ENCODE measurements at regions of chr10 and their contacts with region 1.

Region 1: DNA sequence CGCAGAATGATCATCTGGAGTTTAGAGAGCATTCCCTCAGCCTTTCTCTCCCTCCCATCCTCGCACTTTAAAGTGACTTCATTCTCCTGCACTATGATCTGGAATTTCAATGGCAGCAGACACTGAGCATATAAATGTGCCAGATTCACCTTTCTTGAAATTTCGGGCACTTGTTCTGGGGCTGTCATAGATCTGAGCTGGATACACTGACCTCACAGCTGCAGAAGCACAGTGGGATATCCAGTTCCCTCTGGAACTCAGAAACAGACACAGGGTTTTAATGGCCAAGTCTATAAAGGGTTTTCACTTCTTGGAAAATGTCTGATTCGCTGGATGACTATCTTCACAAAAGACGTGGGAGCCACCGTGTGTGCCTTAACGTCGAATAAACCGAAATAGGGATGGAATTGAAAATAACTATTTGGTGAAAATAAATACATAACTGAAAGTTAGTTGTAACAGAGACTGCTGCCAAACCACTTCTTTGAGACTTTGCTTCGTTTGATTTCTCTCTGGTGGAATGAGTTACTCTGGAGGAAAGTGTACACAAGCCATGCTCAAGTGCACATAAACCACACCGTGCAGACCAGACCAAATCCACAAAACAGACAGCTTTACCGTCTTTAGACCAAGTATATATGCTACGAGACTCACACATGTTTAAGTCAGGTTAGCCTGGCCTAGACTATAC is 126.1 kb downstream of the SVIL start:
- DNase-seq: no peak
- ATAC-seq: no peak
- H3K4me3 Mint-ChIP-seq: no peak overlapping the region
- H3K27ac Mint-ChIP-seq: no peak overlapping the region
- H3K4me1 Mint-ChIP-seq: peaks cover 5% of the 10 kb centered on the region
- H3K27me3 Mint-ChIP-seq: no peaks in the 10 kb centered on the region

Region 2: GRCh38 chr10:29522061-29522855 is 13.6 kb after region 1 on chr10:
- CTCF ChIA-PET with region 1: interaction called, 53 read pairs
- POLR2A ChIA-PET with region 1: no interaction called
- DNase-seq: no peak
- ATAC-seq: peak; percentile 42
- H3K4me3 Mint-ChIP-seq: peak overlapping the region; percentile 12
- H3K27ac Mint-ChIP-seq: peak overlapping the region; percentile 52
- H3K4me1 Mint-ChIP-seq: peaks cover 12% of the 10 kb centered on the region
- H3K27me3 Mint-ChIP-seq: no peaks in the 10 kb centered on the region

Region 3: DNA sequence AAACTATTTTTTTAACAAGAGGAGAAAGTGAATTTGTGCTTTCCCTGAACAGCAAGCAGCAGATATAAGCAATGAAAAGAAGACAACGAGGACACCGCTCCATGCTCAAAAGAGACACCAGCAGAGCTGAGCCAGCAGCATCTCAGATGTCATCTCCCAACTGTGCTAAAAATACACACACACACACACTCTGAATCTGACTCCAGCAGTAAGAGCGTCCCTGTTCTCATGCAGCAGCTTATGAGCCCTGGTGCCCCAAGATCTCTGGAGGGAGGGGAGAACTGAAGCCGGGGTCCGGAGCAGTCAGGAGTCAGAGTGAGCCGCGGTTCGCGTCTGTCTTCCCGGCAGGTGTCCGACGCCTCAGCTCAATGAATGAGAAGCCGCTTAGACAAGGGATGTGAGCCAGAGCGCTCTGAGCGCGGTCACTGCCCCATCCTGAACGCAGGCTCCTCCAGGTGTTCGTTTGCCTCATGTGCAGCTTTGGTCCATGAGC is 76.8 kb after region 1 on chr10:
- CTCF ChIA-PET with region 1: interaction called, 15 read pairs
- POLR2A ChIA-PET with region 1: no interaction called
- DNase-seq: no peak
- ATAC-seq: no peak
- H3K4me3 Mint-ChIP-seq: no peak overlapping the region
- H3K27ac Mint-ChIP-seq: no peak overlapping the region
- H3K4me1 Mint-ChIP-seq: peaks cover 16% of the 10 kb centered on the region
- H3K27me3 Mint-ChIP-seq: no peaks in the 10 kb centered on the region

Measured in activated CD8-positive, alpha-beta T cell treated with anti-CD3 and anti-CD28 coated beads, Interleukin-2, amount 10 ng/mL, durations not matched to agents 7 days and 5 days (primary cell).